AG04449 (cell line): ENCODE measurements at regions of chr9 and their contacts with region 1.

Region 1: GRCh38 chr9:127869310-127870152 is 7.9 kb downstream of the AK1 start:
- DNase-seq: no peak
- H3K4me3 ChIP-seq: no peak overlapping the region
- CTCF ChIP-seq: peak; percentile 96

Region 2: GRCh38 chr9:127734747-127735529 is 134.6 kb before region 1 on chr9 and contains the start of gene TOR2A:
- CTCF ChIA-PET with region 1: interaction called, 115 read pairs
- POLR2A ChIA-PET with region 1: interaction called, 5 read pairs
- DNase-seq: no peak
- H3K4me3 ChIP-seq: peak within 1 kb of the TSS; percentile 75
- CTCF ChIP-seq: peak; percentile 98

Region 3: GRCh38 chr9:127802576-127803443 is 66.7 kb before region 1 on chr9 and contains the start of gene FPGS:
- CTCF ChIA-PET with region 1: interaction called, 11 read pairs
- POLR2A ChIA-PET with region 1: interaction called, 3 read pairs
- DNase-seq: peak; percentile 36
- H3K4me3 ChIP-seq: peak within 1 kb of the TSS; percentile 81
- CTCF ChIP-seq: no peak

Region 4: GRCh38 chr9:127844821-127845359 is 24.6 kb before region 1 on chr9:
- CTCF ChIA-PET with region 1: interaction called, 12 read pairs
- POLR2A ChIA-PET with region 1: no interaction called
- DNase-seq: no peak
- H3K4me3 ChIP-seq: no peak overlapping the region
- CTCF ChIP-seq: no peak

Region 5: GRCh38 chr9:127884427-127884911 is 14.9 kb after region 1 on chr9:
- CTCF ChIA-PET with region 1: interaction called, 29 read pairs
- POLR2A ChIA-PET with region 1: no interaction called
- DNase-seq: no peak
- H3K4me3 ChIP-seq: no peak overlapping the region
- CTCF ChIP-seq: no peak

Region 6: GRCh38 chr9:127899128-127899946 is 29.8 kb after region 1 on chr9 and contains the start of gene ST6GALNAC6:
- CTCF ChIA-PET with region 1: interaction called, 22 read pairs
- POLR2A ChIA-PET with region 1: interaction called, 3 read pairs
- DNase-seq: no peak
- H3K4me3 ChIP-seq: peak within 1 kb of the TSS; percentile 85
- CTCF ChIP-seq: no peak

Region 7: GRCh38 chr9:128225770-128226407 is 356.4 kb after region 1 on chr9:
- CTCF ChIA-PET with region 1: no interaction called
- POLR2A ChIA-PET with region 1: no interaction called
- DNase-seq: no peak
- H3K4me3 ChIP-seq: no peak overlapping the region
- CTCF ChIP-seq: no peak